ENCODE measurements at regions of chr6 and their contacts with region 1.

Region 1: GRCh38 chr6:160030103-160030502 is 61.2 kb downstream of the IGF2R start:
- DNase-seq: peak; percentile 92
- ATAC-seq: peak; percentile 92

Region 2: DNA sequence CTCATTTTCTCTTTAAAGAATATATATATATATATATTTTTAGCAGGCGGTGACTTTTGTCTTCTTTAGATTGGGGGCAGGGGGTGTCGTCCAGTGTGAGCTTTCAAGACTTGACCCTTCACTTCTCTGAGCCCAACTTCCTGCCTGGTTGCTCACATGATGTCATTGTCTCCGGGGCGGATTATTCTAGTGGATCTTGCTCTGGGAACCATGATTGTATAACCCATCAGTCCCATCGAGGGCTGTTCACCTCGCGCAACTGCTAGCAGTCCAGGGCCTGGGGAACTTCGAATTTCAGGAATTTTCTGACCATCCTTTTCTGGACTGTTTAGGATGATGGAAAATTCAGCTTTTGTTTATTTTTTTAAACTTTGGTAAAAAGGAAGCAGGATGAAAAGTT is 60.2 kb before region 1 on chr6:
- intact Hi-C with region 1: loop called (anchors 5 kb)
- DNase-seq: no peak
- ATAC-seq: peak; percentile 83

Measured in sciatic nerve (tissue), 2 donors.